ENCODE measurements at regions of chr17 and their contacts with region 1.

Region 1: GRCh38 chr17:50478391-50479381 is at the start of gene RSAD1:
- DNase-seq: peak; percentile 77 to 89
- ATAC-seq: peak; percentile 62 to 71
- H3K4me3 ChIP-seq: peak within 1 kb of the TSS; percentile 72 to 91 (median 82)
- H3K27ac ChIP-seq: peak within 1 kb of the TSS; percentile 95 to 98 (median 97)
- H3K4me1 ChIP-seq: peaks cover 32 to 39% of the 10 kb centered on the region in 2 donors
- H3K27me3 ChIP-seq: no peaks in the 10 kb centered on the region
- CTCF ChIP-seq: peak; percentile 81 to 96 (median 95)
- POLR2A ChIP-seq: peak; percentile 93 to 97
- total RNA-seq, gene RSAD1: 27.1 to 67.4 (median 52.7) TPM

Region 2: DNA sequence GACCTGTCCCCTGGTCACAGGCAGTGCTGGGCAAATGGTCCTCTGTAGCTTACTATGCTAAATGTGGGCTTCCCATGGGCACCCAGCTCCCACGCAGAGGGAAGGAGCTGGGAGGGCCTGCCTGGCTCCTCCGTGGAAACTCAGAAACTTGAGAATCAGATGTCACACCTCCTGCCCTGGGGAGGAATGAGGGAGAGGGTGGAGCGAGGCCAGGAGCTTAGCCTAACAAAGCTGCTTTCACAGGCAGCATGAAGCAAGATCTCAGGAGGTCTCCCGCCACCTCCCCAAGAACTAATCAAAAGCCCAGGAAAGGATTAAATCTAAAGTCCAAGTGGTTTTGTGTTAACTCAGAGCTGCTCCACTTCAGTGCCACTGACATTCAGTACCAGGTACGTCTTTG is 166.4 kb before region 1 on chr17:
- in situ Hi-C with region 1: no loop called
- intact Hi-C with region 1: no loop called
- DNase-seq: no peak
- ATAC-seq: no peak
- H3K4me3 ChIP-seq: no peak overlapping the region
- H3K27ac ChIP-seq: no peak overlapping the region
- H3K4me1 ChIP-seq: no peaks in the 10 kb centered on the region
- H3K27me3 ChIP-seq: peaks cover 0 to 5% (median 0%) of the 10 kb centered on the region in 3 donors
- CTCF ChIP-seq: no peak
- POLR2A ChIP-seq: no peak

Region 3: GRCh38 chr17:50372758-50373556 is 105.7 kb before region 1 on chr17 and contains the starts of genes EME1 and MRPL27:
- in situ Hi-C with region 1: loop called in 1 of 4 experiments (anchors 25 kb)
- intact Hi-C with region 1: loop called (anchors 2 kb)
- DNase-seq: peak; percentile 80 to 81
- ATAC-seq: peak; percentile 96 to 98
- H3K4me3 ChIP-seq: peak within 1 kb of the TSS; percentile 83 to 98 (median 84)
- H3K27ac ChIP-seq: peak within 1 kb of the TSS; percentile 94 to 99 (median 96)
- H3K4me1 ChIP-seq: peaks cover 20 to 33% of the 10 kb centered on the region in 2 donors
- H3K27me3 ChIP-seq: no peaks in the 10 kb centered on the region
- CTCF ChIP-seq: peak in 2 of 5 experiments; percentile 23 to 46
- POLR2A ChIP-seq: peak; percentile 36 to 61
- total RNA-seq, gene EME1: 0.82 to 0.95 TPM in 2 of 4 donors, not detected in the others
- total RNA-seq, gene MRPL27: 110 to 141 (median 134) TPM

Region 4: GRCh38 chr17:50425682-50426471 is 52.8 kb before region 1 on chr17 and contains the start of gene ACSF2:
- in situ Hi-C with region 1: loop called in 1 of 4 experiments (anchors 10 kb)
- intact Hi-C with region 1: loop called (anchors 2 kb)
- DNase-seq: peak; percentile 69 to 77
- ATAC-seq: peak; percentile 48 to 55
- H3K4me3 ChIP-seq: peak within 1 kb of the TSS; percentile 68 to 94 (median 86)
- H3K27ac ChIP-seq: peak within 1 kb of the TSS; percentile 93 to 96 (median 94)
- H3K4me1 ChIP-seq: peaks cover 40 to 50% of the 10 kb centered on the region in 2 donors
- H3K27me3 ChIP-seq: no peaks in the 10 kb centered on the region
- CTCF ChIP-seq: no peak
- POLR2A ChIP-seq: peak; percentile 81 to 88
- total RNA-seq, gene ACSF2: 8.7 to 61.4 (median 34.2) TPM

Region 5: GRCh38 chr17:50547035-50547735 is 68.5 kb after region 1 on chr17 and contains the start of gene SPATA20:
- in situ Hi-C with region 1: no loop called
- intact Hi-C with region 1: loop called (anchors 1 kb)
- DNase-seq: peak; percentile 87 to 90
- ATAC-seq: peak; percentile 77 to 80
- H3K4me3 ChIP-seq: peak within 1 kb of the TSS; percentile 61 to 71 (median 67)
- H3K27ac ChIP-seq: peak within 1 kb of the TSS; percentile 76 to 84 (median 82)
- H3K4me1 ChIP-seq: peaks cover 16 to 21% of the 10 kb centered on the region in 2 donors
- H3K27me3 ChIP-seq: no peaks in the 10 kb centered on the region
- CTCF ChIP-seq: peak; percentile 96 to 100 (median 98)
- POLR2A ChIP-seq: peak; percentile 70 to 84
- total RNA-seq, gene SPATA20: 22.3 to 67.9 (median 29.1) TPM

Region 6: GRCh38 chr17:50707289-50708049 is 228.8 kb after region 1 on chr17 and contains the start of gene ANKRD40:
- in situ Hi-C with region 1: loop called in 1 of 4 experiments (anchors 10 kb)
- intact Hi-C with region 1: loop called (anchors 10 kb)
- DNase-seq: peak; percentile 90 to 93
- ATAC-seq: peak; percentile 94 to 95
- H3K4me3 ChIP-seq: peak within 1 kb of the TSS; percentile 64 to 83 (median 76)
- H3K27ac ChIP-seq: peak within 1 kb of the TSS; percentile 90 to 97 (median 96)
- H3K4me1 ChIP-seq: peaks cover 42 to 43% of the 10 kb centered on the region in 2 donors
- H3K27me3 ChIP-seq: no peaks in the 10 kb centered on the region
- CTCF ChIP-seq: peak in 2 of 5 experiments; percentile 10 to 26
- POLR2A ChIP-seq: peak; percentile 87 to 88
- total RNA-seq, gene ANKRD40: 97.3 to 135 (median 112) TPM

Region 7: GRCh38 chr17:50883850-50884438 is 405.3 kb after region 1 on chr17:
- in situ Hi-C with region 1: no loop called
- intact Hi-C with region 1: no loop called
- DNase-seq: no peak
- ATAC-seq: no peak
- H3K4me3 ChIP-seq: no peak overlapping the region
- H3K27ac ChIP-seq: no peak overlapping the region
- H3K4me1 ChIP-seq: no peaks in the 10 kb centered on the region
- H3K27me3 ChIP-seq: no peaks in the 10 kb centered on the region
- CTCF ChIP-seq: no peak
- POLR2A ChIP-seq: no peak

Measured in gastrocnemius medialis (tissue), 4 donors.